HEK293 (cell line): ENCODE measurements at regions of chr19 and their contacts with region 1.

Region 1: GRCh38 chr19:55536951-55537740 is at the start of gene SBK2:
- H3K4me3 ChIP-seq: no peak within 1 kb of the TSS
- H3K27ac ChIP-seq: no peak within 1 kb of the TSS
- H3K4me1 ChIP-seq: no peaks in the 10 kb centered on the region
- CTCF ChIP-seq: no peak

Region 2: DNA sequence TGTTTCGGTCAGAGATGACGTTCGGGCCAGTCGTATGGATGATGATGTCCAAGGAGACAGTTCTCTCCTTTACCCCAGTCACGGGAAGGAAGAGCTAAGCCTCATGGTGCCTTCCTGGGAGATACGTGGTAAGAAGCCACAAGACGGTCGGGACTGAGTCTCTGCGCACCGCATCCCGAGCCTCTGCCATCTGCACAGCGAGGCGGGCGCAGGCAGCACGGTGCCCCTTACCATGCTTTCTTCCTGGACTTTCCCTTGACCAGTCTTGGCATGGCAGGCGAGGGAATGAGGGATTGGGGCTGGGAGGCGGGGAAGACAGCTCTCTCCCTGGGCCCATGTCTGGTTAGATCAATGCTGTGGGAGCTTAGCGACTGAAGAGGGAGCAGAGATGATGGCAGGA is 1044.6 kb before region 1 on chr19:
- CTCF ChIA-PET with region 1: no interaction called
- POLR2A ChIA-PET with region 1: interaction called, 10 read pairs
- H3K4me3 ChIP-seq: no peak overlapping the region
- H3K27ac ChIP-seq: no peak overlapping the region
- H3K4me1 ChIP-seq: no peaks in the 10 kb centered on the region
- CTCF ChIP-seq: no peak

Region 3: DNA sequence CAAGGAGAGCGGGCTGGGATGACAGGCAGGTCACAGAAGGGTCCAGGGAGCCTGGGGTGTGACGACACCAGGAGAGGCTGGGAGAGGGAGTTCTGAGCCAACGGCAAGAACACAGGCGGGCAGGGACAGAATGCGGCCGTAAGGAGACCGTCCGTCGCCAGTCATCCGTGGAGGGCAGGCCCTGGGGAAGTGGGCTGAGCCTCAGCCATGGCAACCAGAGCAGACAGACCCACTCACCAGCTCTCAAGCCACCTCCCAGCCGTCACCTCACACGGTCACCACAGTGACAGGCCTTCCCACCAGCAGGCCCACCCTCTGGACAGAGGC is 304.9 kb before region 1 on chr19:
- CTCF ChIA-PET with region 1: no interaction called
- POLR2A ChIA-PET with region 1: interaction called, 11 read pairs
- H3K4me3 ChIP-seq: no peak overlapping the region
- H3K27ac ChIP-seq: no peak overlapping the region
- H3K4me1 ChIP-seq: no peaks in the 10 kb centered on the region
- CTCF ChIP-seq: no peak